Cardiac septum (tissue), 1 donor: ENCODE measurements at regions of chr5 and their contacts with region 1.

Region 1: DNA sequence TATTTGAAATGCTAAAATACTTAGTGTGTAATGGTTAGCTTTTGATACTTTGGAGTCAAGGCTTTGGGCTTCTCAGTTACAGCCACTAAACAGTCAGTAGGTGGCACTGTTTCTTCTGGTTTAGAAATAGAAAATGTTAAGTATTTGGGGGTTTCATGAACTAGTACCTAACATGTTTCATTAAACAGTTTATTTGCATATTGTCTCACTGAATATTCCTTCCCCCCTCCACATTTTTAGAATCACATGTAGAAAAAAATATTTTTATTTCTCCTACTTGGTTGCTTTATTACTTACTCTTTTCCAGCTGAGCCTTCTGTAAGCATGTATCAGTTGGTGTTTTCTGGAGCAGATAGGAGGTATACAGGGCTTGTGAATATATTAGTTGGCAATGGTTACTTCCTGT is 48.0 kb downstream of the IPO11 start:
- DNase-seq: no peak

Region 2: GRCh38 chr5:62331921-62332320 is 128.7 kb before region 1 on chr5:
- intact Hi-C with region 1: no loop called
- DNase-seq: no peak

Region 3: DNA sequence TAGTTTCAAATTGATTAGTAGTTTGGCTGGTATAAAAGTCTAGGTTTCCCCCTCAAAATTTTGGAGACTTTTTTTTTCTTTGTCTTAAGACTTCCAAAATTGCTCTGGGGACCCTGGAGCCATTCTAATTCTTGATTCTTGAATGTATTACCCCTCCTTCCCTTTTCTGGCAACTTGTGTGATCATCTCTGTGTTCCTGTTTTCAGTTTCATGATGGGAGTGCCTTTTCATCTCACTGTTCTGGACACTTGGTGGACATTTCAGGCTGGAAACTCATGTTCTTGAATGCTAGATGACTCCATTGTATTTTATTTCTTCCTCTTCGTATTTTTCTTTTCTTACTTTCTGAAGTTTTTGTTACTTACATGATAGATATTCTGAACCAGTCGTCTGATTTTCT is 60.7 kb after region 1 on chr5:
- intact Hi-C with region 1: no loop called
- DNase-seq: no peak

Region 4: GRCh38 chr5:62621280-62621679 is 160.7 kb after region 1 on chr5:
- intact Hi-C with region 1: loop called (anchors 10 kb)
- DNase-seq: no peak

Region 5: DNA sequence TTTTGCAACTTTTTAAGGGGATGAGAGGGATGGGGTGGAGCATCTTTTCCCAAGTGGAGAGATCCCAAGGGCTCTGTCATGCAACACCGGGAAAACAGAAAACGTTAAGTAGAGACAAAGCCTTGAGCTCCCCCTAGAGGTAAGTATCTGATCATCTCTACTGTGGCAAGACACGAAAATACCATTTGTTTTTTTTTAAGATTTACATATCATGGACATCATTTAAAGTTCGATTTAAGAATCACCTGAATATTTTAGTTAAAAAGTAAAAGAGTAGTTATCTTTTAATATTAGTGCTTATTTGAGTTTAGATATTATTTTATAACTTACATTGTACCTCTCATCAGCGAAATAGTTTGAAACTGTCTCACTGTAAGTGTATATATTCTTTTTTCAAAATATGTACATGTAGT is 318.4 kb after region 1 on chr5:
- intact Hi-C with region 1: loop called (anchors 2 kb)
- DNase-seq: no peak